Mammary epithelial cell (primary cell): ENCODE measurements at regions of chr22 and their contacts with region 1.

Region 1: DNA sequence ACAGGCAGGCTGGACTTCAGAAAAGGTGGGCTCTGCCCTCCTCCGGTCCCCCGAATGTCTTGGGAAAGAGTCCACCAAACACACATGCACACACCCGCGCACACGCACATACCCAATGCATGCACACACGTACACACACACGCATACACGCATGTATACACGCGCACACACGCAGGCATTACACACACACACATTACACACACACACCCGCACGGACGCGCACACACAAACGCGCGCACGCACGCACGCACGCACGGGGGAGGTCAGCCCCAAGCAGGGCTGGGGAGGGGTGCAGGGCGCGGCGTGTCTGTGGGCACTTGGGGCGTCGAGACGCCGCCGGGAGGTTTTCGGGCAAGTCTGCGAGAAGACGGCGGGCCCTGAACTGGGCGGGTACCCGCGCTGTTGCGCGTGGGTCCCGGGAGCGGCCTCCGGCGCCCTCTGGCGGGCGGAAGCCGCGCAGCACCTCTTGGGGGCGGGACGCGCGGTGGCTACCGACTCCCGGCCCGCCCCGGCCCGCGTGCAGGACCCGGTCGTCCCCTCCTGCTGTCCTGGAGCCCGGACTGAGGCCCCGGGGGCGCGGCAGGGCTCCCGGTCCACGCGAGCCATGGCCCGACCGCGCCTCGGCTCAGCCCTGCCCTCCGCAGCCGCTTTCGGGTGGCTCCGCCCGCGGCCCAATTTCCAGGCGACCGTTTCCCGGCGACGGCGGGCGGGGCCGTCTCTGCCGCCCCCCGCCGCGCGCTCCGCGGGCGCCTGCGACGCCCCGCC is 3.6 kb downstream of the SEPTIN5 start:
- DNase-seq: peak; percentile 55
- H3K4me3 ChIP-seq: peak overlapping the region; percentile 32 to 61 (median 51)
- H3K27ac ChIP-seq: no peak overlapping the region
- H3K4me1 ChIP-seq: peaks cover 20% of the 10 kb centered on the region
- H3K27me3 ChIP-seq: no peaks in the 10 kb centered on the region
- CTCF ChIP-seq: peak; percentile 26 to 76

Region 2: GRCh38 chr22:18954990-18955571 is 762.8 kb before region 1 on chr22:
- CTCF ChIA-PET with region 1: no interaction called
- dilution Hi-C with region 1: no loop called
- in situ Hi-C with region 1: no loop called
- intact Hi-C with region 1: loop called (anchors 5 kb)
- DNase-seq: no peak
- H3K4me3 ChIP-seq: no peak overlapping the region
- H3K27ac ChIP-seq: no peak overlapping the region
- H3K4me1 ChIP-seq: no peaks in the 10 kb centered on the region
- H3K27me3 ChIP-seq: no peaks in the 10 kb centered on the region
- CTCF ChIP-seq: no peak

Region 3: GRCh38 chr22:19291580-19292457 is 426.1 kb before region 1 on chr22 and contains the start of gene CLTCL1:
- CTCF ChIA-PET with region 1: no interaction called
- dilution Hi-C with region 1: no loop called
- in situ Hi-C with region 1: no loop called
- intact Hi-C with region 1: loop called (anchors 10 kb)
- DNase-seq: peak; percentile 71
- H3K4me3 ChIP-seq: peak within 1 kb of the TSS; percentile 74 to 81 (median 80)
- H3K27ac ChIP-seq: peak within 1 kb of the TSS; percentile 46
- H3K4me1 ChIP-seq: peaks cover 47% of the 10 kb centered on the region
- H3K27me3 ChIP-seq: no peaks in the 10 kb centered on the region
- CTCF ChIP-seq: no peak
- total RNA-seq, gene CLTCL1: 30.0 to 33.2 TPM

Region 4: DNA sequence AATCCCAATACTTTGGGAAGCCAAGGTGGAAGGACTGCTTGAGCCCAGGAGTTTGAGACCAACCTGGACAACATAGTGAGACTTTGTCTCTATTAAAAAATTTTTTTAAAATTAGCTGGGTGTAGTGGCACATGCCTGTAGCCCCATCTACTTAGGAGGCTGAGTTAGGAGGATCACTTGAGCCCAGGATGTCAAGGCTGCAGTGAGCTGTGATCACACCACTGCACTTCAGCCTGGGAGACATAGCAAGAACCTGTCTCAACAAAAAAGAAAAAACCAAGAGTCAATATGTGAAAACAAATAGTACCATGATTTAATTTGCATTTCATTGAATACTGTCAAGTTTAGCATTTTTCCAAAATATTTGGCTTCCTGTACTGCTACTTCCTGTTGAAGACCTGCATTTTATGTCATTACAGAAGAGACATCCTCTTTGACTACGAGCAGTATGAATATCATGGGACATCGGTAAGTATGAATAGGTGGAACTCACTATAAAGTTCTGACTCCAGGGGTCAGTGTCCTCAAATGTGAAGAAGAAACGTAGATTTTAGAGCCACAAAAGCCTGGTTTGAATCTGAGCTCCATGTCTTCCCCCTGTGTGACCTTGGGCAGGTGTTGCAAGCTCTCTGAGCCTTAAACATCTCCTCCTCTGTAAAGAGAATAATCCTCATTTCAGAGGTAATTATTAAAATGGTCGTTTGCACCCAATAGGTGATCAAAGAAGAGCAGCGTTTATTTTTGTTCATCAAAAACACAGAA is 222.1 kb before region 1 on chr22:
- CTCF ChIA-PET with region 1: interaction called, 6 read pairs
- dilution Hi-C with region 1: no loop called
- in situ Hi-C with region 1: no loop called
- intact Hi-C with region 1: loop called (anchors 2 kb)
- DNase-seq: no peak
- H3K4me3 ChIP-seq: no peak overlapping the region
- H3K27ac ChIP-seq: no peak overlapping the region
- H3K4me1 ChIP-seq: peaks cover 10% of the 10 kb centered on the region
- H3K27me3 ChIP-seq: no peaks in the 10 kb centered on the region
- CTCF ChIP-seq: peak in 1 of 2 donors; percentile 35

Region 5: GRCh38 chr22:19679522-19680101 is 38.3 kb before region 1 on chr22:
- CTCF ChIA-PET with region 1: no interaction called
- dilution Hi-C with region 1: no loop called
- in situ Hi-C with region 1: no loop called
- intact Hi-C with region 1: loop called (anchors 1 kb)
- DNase-seq: no peak
- H3K4me3 ChIP-seq: no peak overlapping the region
- H3K27ac ChIP-seq: no peak overlapping the region
- H3K4me1 ChIP-seq: no peaks in the 10 kb centered on the region
- H3K27me3 ChIP-seq: no peaks in the 10 kb centered on the region
- CTCF ChIP-seq: peak; percentile 66 to 96

Region 6: DNA sequence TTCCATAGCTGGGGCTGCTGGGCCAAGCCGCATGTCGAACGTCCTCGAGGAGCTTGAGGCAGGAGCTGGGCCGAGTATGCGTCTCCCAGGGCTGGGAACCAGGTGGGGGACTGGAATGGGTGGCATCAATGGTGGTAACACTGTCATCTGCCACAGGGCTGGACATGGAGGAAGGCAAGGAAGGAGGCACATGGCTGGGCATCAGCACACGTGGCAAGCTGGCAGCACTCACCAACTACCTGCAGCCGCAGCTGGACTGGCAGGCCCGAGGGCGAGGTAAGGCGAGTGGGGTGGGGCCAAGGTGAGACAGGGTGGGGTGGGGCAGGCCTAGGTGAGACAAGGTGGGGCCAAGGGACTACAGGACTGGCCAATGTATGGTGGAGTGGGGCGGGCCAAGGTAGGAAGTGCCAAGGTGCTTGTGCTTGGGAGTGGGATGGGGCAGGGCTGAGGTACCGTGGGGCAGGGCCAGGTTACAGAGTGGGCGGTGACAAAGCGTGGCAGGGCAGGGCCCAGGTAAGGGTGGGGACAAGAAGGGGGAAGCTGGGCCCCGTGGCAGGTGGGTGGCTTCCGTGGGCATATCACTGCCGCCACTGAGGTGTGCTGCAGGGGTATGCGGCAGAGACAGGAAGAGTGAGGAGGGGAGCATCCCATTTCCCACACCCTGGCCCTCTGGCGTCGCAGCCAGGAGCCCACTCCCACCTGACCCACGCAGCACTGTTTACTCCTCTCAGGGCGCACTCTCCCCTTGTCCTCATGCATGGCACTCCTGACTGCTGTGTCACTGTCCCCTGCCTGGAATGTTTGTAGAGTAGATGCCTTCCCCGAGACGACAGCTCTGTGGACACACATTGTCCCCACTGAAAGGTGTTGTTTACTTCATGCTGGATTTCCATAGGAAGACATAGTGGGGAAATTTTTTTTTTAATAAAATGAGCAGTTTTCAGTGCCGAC is 334.7 kb after region 1 on chr22:
- CTCF ChIA-PET with region 1: no interaction called
- dilution Hi-C with region 1: no loop called
- in situ Hi-C with region 1: no loop called
- intact Hi-C with region 1: no loop called
- DNase-seq: no peak
- H3K4me3 ChIP-seq: no peak overlapping the region
- H3K27ac ChIP-seq: no peak overlapping the region
- H3K4me1 ChIP-seq: no peaks in the 10 kb centered on the region
- H3K27me3 ChIP-seq: no peaks in the 10 kb centered on the region
- CTCF ChIP-seq: no peak